H1 (cell line): ENCODE measurements at regions of chr1 and their contacts with region 1.

Region 1: DNA sequence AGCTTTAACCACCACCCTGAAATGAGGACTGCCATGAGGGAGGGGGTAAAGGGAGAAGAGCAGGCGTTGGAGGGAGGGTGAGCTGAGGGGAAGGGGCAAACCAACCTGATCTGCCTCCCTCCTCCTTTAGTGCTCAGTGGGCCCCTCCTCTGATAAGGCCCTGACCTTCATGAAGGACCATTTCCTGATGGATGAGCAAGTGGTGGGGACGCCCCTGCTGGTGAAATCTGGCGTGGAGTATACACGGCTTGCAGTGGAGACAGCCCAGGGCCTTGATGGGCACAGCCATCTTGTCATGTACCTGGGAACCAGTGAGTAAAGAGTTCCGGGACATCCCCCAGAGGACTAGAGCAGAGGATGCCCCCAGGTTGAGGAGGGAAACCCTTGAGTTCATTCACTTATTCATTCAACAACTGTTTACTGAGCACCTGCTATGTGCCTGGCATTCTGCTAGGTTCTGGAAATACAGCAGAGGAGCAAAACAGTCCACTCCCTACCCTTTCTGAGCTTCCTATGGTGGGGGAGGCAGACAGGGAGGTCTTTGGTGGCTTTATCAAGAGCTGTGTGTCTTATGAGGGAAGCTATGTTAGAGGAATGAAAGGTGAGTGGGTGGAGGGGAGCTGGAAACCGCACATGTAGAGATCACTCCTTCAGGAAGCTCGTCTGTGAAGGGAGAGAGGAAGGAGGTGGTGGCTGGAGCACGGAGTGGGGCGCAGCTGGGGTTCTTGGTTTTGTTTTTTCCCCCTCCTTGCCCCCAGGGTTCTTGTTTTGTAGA is 19.5 kb downstream of the SEMA4A start:
- DNase-seq: no peak
- H3K4me3 ChIP-seq: no peak overlapping the region
- H3K27ac ChIP-seq: peak overlapping the region; percentile 25; the same call in 1 of the 2 replicates
- H3K4me1 ChIP-seq: peaks cover 2 to 11% (median 7%) of the 10 kb centered on the region in 4 experiments
- H3K27me3 ChIP-seq: peaks cover 0 to 2% (median 0%) of the 10 kb centered on the region in 4 experiments; a peak in 1 of 7 replicates
- CTCF ChIP-seq: peak; percentile 16 to 65 (median 59); a peak in 3 of 4 replicates
- EP300 ChIP-seq: no peak
- POLR2A ChIP-seq: no peak
- RAD21 ChIP-seq: peak in 1 of 2 experiments; percentile 13; a peak in 2 of 4 replicates

Region 2: GRCh38 chr1:156136970-156137483 is 35.9 kb before region 1 on chr1:
- CTCF ChIA-PET with region 1: interaction called, 30 read pairs
- POLR2A ChIA-PET with region 1: interaction called, 5 read pairs
- DNase-seq: peak in 1 of 2 experiments; percentile 67
- H3K4me3 ChIP-seq: no peak overlapping the region
- H3K27ac ChIP-seq: no peak overlapping the region
- H3K4me1 ChIP-seq: peaks cover 0 to 6% (median 4%) of the 10 kb centered on the region in 4 experiments; a peak in 4 of 7 replicates
- H3K27me3 ChIP-seq: no peaks in the 10 kb centered on the region
- CTCF ChIP-seq: peak; percentile 59 to 71 (median 65)
- EP300 ChIP-seq: no peak
- POLR2A ChIP-seq: no peak
- RAD21 ChIP-seq: peak; percentile 32 to 51; a peak in 3 of 4 replicates

Region 3: GRCh38 chr1:156146020-156146768 is 26.7 kb before region 1 on chr1:
- CTCF ChIA-PET with region 1: interaction called, 30 read pairs
- POLR2A ChIA-PET with region 1: interaction called, 27 read pairs
- DNase-seq: no peak
- H3K4me3 ChIP-seq: peak overlapping the region in 1 of 4 experiments; percentile 35; a peak in 3 of 8 replicates
- H3K27ac ChIP-seq: peak overlapping the region; percentile 17; the same call in 1 of the 2 replicates
- H3K4me1 ChIP-seq: peaks cover 20 to 39% (median 29%) of the 10 kb centered on the region in 4 experiments
- H3K27me3 ChIP-seq: no peaks in the 10 kb centered on the region
- CTCF ChIP-seq: peak in 2 of 3 experiments; percentile 60 to 62; a peak in 3 of 4 replicates
- EP300 ChIP-seq: no peak
- POLR2A ChIP-seq: no peak
- RAD21 ChIP-seq: peak; percentile 74 to 79

Region 4: DNA sequence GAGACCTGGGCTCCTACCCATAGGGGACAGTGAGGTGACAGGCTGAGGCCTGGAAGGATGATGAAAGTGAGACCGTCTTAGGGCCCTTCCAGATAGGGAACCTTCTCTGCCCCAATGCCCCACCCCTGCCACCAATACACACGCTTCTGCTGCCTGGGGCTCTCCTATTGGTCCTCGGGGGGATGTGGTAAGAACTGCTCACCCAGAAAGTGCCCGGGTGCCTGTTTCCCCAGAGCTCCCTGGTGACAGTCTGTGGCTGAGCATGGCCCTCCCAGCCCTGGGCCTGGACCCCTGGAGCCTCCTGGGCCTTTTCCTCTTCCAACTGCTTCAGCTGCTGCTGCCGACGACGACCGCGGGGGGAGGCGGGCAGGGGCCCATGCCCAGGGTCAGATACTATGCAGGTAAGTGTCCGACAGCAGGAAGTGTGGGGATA is 18.6 kb before region 1 on chr1:
- CTCF ChIA-PET with region 1: interaction called, 65 read pairs
- POLR2A ChIA-PET with region 1: interaction called, 27 read pairs
- DNase-seq: no peak
- H3K4me3 ChIP-seq: no peak overlapping the region
- H3K27ac ChIP-seq: no peak overlapping the region
- H3K4me1 ChIP-seq: peaks cover 16 to 28% (median 17%) of the 10 kb centered on the region in 4 experiments
- H3K27me3 ChIP-seq: no peaks in the 10 kb centered on the region
- CTCF ChIP-seq: no peak
- EP300 ChIP-seq: no peak
- POLR2A ChIP-seq: no peak
- RAD21 ChIP-seq: no peak

Region 5: GRCh38 chr1:156160743-156161171 is 12.1 kb before region 1 on chr1:
- CTCF ChIA-PET with region 1: interaction called, 65 read pairs
- POLR2A ChIA-PET with region 1: interaction called, 6 read pairs
- DNase-seq: peak in 1 of 2 experiments; percentile 81
- H3K4me3 ChIP-seq: peak overlapping the region; percentile 32 to 68 (median 34); a peak in 7 of 8 replicates
- H3K27ac ChIP-seq: no peak overlapping the region
- H3K4me1 ChIP-seq: peaks cover 3 to 14% (median 10%) of the 10 kb centered on the region in 4 experiments; a peak in 6 of 7 replicates
- H3K27me3 ChIP-seq: no peaks in the 10 kb centered on the region
- CTCF ChIP-seq: no peak
- EP300 ChIP-seq: no peak
- POLR2A ChIP-seq: peak in 1 of 2 experiments; percentile 25; a peak in 1 of 3 replicates
- RAD21 ChIP-seq: no peak

Region 6: DNA sequence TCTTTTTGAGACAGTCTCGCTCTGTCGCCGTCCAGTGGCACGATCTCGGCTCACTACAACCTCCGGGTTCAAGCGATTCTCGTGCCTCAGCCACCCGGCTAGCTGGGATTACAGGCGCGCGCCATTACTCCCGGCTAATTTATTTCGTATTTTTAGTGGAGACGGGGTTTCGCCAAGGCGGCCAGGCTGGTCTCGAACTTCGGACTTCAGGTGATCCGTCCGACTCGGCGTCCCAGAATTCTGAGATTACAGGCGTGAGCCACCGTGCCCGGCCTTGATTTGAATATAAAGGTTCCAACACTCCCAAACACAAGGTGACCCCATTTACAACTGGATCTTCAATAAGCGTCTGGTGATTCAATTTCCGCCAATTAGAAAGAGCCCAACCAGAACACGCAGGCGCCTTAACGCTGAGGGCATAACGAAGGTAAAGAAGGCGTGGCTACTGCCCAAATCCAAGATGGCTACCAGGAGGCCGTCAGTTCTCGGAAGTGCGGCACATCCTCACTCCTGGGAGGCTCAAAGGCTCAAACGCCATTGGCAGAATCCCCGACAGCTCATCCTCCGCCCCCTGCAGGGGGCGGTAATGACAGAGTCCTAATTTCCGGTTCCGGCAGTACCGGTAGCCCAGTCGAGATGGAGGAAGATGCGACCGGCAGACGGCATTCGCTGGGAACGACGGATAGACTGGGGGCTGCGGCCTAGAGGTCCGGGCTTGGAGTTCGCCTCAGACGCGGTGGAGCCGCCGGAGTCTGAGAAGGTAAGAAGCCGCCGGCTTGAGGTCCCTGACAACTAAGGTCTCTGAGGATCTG is 20.8 kb after region 1 on chr1 and contains the start of gene SLC25A44:
- CTCF ChIA-PET with region 1: interaction called, 21 read pairs
- POLR2A ChIA-PET with region 1: interaction called, 7 read pairs
- DNase-seq: peak; percentile 96 to 99
- H3K4me3 ChIP-seq: peak within 1 kb of the TSS; percentile 78 to 97 (median 94)
- H3K27ac ChIP-seq: peak within 1 kb of the TSS; percentile 73; the same call in 1 of the 2 replicates
- H3K4me1 ChIP-seq: peaks cover 2 to 16% (median 4%) of the 10 kb centered on the region in 4 experiments; a peak in 5 of 7 replicates
- H3K27me3 ChIP-seq: no peaks in the 10 kb centered on the region
- CTCF ChIP-seq: peak; percentile 25 to 52 (median 51)
- EP300 ChIP-seq: 0 out of 3 replicates have a peak, but pooled peaks of 1 of the 2 experiments have one; percentile 26
- POLR2A ChIP-seq: peak; percentile 59 to 66; a peak in 2 of 3 replicates
- RAD21 ChIP-seq: peak in 1 of 2 experiments; percentile 20; a peak in 1 of 4 replicates
- total RNA-seq, gene SLC25A44: 23.4 and 31.4 TPM in 2 replicates

Region 7: DNA sequence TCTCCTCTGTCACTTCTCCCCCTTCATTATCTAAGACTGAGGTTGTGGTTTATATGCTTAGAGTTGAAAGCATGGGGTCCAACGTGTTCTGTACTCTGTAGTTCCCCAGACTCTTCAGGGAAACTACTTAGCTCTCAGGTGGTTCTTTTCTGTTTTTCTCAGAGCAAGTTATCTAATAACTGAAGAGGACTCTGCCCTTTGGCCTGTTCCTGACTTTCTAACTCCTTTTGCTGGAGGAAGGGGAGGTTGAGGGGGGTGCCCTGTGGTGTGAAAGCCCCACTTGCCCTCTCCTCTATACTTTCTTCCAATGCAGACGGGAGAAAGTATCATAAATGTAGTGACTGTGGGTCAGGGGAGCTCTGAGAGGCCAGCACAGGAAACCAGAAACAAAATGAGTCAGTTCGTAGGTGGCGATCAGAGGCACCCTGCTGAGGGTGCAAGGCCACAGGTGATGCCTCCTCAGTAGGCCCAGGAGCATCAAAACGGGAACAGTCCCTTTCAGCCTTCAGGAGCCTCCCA is 26.0 kb after region 1 on chr1:
- CTCF ChIA-PET with region 1: interaction called, 21 read pairs
- POLR2A ChIA-PET with region 1: interaction called, 7 read pairs
- DNase-seq: no peak
- H3K4me3 ChIP-seq: no peak overlapping the region
- H3K27ac ChIP-seq: no peak overlapping the region
- H3K4me1 ChIP-seq: peaks cover 0 to 16% (median 3%) of the 10 kb centered on the region in 4 experiments; a peak in 4 of 7 replicates
- H3K27me3 ChIP-seq: no peaks in the 10 kb centered on the region
- CTCF ChIP-seq: no peak
- EP300 ChIP-seq: no peak
- POLR2A ChIP-seq: no peak
- RAD21 ChIP-seq: no peak